Left cardiac atrium (tissue), 4 donors: ENCODE measurements at regions of chr17 and their contacts with region 1.

Region 1: GRCh38 chr17:1002771-1003555 is 6.0 kb downstream of the TIMM22 start:
- DNase-seq: no peak
- ATAC-seq: peak; percentile 4 to 42

Region 2: DNA sequence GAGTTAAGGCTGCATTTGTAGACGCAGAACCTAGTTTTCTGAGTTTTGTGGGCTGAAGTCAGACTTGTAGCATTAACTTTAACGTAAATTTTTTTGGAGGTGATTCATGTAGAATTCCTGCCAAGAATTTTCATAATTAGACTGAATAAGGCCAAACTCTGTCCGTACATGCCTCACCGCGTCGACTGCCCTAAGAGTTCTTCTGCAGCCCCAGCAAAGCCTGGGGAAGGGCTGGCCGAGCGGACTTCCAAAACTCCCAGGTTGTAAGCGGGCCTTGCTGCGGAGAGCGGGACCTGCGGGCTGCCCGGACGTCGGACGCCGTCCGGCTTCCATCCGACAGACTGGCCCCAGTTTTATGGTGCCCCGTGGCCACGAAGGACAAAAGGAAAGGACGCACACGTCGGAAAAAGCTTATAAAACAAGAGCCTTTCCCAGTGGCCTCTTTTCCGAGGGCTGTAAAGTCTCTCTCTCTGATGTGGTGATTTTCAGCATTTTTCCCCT is 98.9 kb before region 1 on chr17:
- intact Hi-C with region 1: no loop called
- DNase-seq: no peak
- ATAC-seq: peak in 1 of 2 donors; percentile 55

Region 3: GRCh38 chr17:1047177-1047878 is 44.4 kb after region 1 on chr17:
- intact Hi-C with region 1: loop called in 1 of 2 experiments (anchors 5 kb)
- DNase-seq: peak; percentile 71
- ATAC-seq: peak; percentile 67 to 82

Region 4: DNA sequence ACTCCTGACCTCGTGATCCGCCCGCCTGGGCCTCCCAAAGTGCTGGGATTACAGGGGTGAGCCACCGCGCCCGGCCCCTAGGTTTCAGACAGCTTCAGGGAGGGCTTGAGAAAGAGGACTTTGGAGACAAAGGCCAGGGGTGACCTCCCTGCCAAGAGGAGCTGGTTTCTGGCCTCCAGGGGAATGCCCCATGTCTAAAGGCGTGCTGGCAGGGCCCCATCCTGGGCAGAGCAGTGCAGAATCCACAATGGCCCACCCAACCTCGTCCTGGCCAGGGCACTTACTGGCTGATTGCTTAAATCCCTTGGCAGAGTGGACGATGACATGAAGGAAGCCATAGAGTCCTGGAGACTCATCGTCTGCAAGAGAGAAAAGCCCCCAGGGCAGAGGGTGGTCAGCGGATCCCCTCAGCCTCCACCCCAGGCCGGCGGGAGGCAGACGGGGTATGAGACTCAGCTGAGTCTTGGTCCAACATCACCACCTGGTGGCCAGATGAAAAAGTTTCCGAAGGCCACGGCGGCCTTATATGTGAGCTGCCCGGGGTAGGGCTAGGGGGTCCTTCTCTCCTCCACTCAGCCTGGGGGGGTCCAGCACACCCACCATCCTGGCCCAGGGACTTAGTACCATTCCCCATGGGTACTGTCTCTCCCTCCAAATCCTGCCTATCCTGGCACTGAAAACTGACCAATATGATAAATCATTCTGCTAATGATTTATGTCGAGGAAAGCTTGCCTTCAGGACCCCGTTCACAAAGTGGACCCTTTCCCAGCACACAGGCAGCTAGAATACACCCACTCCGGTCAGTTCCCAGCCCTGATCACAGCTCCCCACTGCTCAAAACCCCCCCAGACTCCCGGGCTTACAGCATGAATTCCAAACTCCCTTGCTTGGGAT is 53.0 kb after region 1 on chr17:
- intact Hi-C with region 1: loop called in 1 of 2 experiments (anchors 2 kb)
- DNase-seq: peak; percentile 67
- ATAC-seq: peak; percentile 69 to 83

Region 5: DNA sequence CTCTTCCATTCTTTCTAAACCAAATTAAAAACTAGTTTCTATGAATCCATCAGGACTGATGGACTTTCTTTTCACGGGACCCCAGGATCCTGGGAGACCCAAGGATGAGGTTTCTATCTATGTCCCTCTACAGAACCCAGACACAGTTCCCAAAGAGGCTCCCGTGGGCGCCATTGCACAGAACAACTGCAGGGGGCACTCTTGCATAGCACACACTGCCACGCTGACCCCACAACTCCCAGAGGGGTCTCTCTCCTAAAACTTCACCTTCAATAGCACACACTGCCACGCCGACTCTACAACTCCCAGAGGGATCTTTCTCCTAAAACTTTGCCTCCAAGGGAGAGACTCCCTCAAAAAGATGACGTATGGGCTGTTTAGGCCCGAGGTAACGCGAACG is 167.8 kb after region 1 on chr17:
- intact Hi-C with region 1: no loop called
- DNase-seq: no peak
- ATAC-seq: no peak